Dendritic cell treated with granulocyte-macrophage colony-stimulating factor and Interleukin-4, amounts not matched to agents 40 ng/mL and 50 ng/mL, for 4 days (primary cell): ENCODE measurements at regions of chr1 and their contacts with region 1.

Region 1: GRCh38 chr1:25997828-25998761 is at the start of gene PAFAH2:
- H3K4me3 Mint-ChIP-seq: peak within 1 kb of the TSS; percentile 97
- H3K27ac Mint-ChIP-seq: peak within 1 kb of the TSS; percentile 97
- H3K4me1 Mint-ChIP-seq: peaks cover 38% of the 10 kb centered on the region
- H3K27me3 Mint-ChIP-seq: no peaks in the 10 kb centered on the region

Region 2: GRCh38 chr1:25819576-25820246 is 178.4 kb before region 1 on chr1 and contains the start of gene MTFR1L:
- intact Hi-C with region 1: loop called (anchors 5 kb)
- H3K4me3 Mint-ChIP-seq: peak within 1 kb of the TSS; percentile 87
- H3K27ac Mint-ChIP-seq: peak within 1 kb of the TSS; percentile 82
- H3K4me1 Mint-ChIP-seq: peaks cover 53% of the 10 kb centered on the region
- H3K27me3 Mint-ChIP-seq: no peaks in the 10 kb centered on the region

Region 3: DNA sequence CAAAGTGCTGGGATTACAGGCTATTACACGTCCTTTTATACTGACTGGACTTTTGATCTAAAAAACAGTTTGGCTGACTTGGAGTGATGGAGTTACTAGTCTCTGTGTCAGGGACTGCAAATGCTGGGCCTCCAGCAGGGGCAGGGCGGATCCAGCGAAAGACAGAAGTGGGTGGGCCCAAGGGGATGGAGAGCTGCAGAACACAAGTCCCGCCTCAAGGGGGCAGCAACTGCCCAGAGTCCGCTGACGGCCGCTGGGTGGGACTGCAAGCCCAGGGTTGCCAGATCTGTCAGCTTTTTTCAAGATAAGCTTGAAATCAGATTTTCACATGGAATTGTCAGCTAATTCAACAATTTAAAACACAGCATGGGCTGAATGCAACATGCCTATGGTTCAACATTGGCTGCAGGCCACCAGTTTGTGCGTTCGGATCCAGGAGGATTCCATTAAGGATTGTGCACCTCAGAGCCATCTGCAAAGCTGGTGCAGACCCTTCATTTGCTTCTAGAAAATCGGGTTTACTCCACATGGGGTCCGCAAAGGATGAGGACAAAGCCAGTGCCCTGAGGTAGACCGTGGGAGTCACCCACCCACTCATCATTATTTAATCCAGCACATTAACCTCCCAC is 102.6 kb before region 1 on chr1:
- intact Hi-C with region 1: loop called (anchors 1 kb)
- H3K4me3 Mint-ChIP-seq: no peak overlapping the region
- H3K27ac Mint-ChIP-seq: no peak overlapping the region
- H3K4me1 Mint-ChIP-seq: peaks cover 18% of the 10 kb centered on the region
- H3K27me3 Mint-ChIP-seq: no peaks in the 10 kb centered on the region

Region 4: GRCh38 chr1:25904943-25905679 is 93.0 kb before region 1 on chr1:
- intact Hi-C with region 1: loop called (anchors 1 kb)
- H3K4me3 Mint-ChIP-seq: peak overlapping the region; percentile 80
- H3K27ac Mint-ChIP-seq: peak overlapping the region; percentile 76
- H3K4me1 Mint-ChIP-seq: peaks cover 17% of the 10 kb centered on the region
- H3K27me3 Mint-ChIP-seq: peaks cover 27% of the 10 kb centered on the region